ENCODE measurements at regions of chr13 and their contacts with region 1.

Region 1: DNA sequence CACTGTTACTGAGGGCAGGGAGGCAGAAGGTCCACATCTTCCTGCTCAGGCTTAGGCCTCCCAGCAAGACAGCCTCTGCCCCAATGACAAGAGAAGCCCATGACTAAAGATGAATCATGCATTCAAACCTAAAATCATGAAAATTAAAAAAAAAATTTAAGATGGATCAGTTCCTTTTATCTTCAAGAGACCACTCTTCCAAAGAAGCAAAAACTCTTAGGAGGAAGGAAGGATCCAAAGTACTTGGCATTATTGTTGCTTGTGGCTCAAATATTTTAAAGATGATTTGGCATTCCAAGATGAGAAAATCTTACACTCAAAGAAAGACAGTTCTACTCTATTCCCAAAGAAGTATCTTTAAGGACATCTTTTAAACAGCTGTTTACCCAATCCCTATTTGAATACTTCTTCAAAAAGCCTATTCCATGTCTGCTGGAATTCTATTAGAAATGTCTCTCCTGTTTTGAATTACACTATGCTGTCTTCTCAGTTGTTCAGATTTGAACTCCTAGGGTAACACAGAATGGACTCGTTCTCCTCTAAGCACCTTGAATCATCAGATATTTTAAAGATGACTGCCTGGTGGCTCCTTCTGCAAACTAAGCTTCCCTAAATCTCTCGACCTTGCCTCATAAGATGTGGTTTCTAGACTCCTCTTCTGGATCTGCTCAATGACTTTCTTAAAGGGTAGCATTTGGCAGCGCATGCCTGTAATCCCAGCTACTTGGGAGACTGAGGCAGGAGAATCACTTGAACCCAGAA is 7.0 kb downstream of the SERP2 start:
- DNase-seq: no peak
- ATAC-seq: no peak
- H3K4me3 ChIP-seq: no peak overlapping the region
- H3K27ac ChIP-seq: no peak overlapping the region
- H3K4me1 ChIP-seq: peaks cover 6% of the 10 kb centered on the region in 2 donors
- H3K27me3 ChIP-seq: no peaks in the 10 kb centered on the region
- CTCF ChIP-seq: no peak
- POLR2A ChIP-seq: no peak

Region 2: GRCh38 chr13:44331912-44332851 is 48.4 kb before region 1 on chr13:
- in situ Hi-C with region 1: no loop called
- intact Hi-C with region 1: loop called (anchors 5 kb)
- DNase-seq: peak in 1 of 2 donors; percentile 42
- ATAC-seq: peak; percentile 29 to 66
- H3K4me3 ChIP-seq: no peak overlapping the region
- H3K27ac ChIP-seq: peak overlapping the region; percentile 32 to 51 (median 44)
- H3K4me1 ChIP-seq: peaks cover 7 to 11% of the 10 kb centered on the region in 2 donors
- H3K27me3 ChIP-seq: no peaks in the 10 kb centered on the region
- CTCF ChIP-seq: no peak
- POLR2A ChIP-seq: no peak